K562 (cell line): ENCODE measurements at regions of chr17 and their contacts with region 1.

Region 1: GRCh38 chr17:80426681-80427326 is 11.8 kb downstream of the ENDOV start:
- DNase-seq: peak; percentile 84 to 90 (median 90)
- ATAC-seq: peak; percentile 98
- H3K4me3 ChIP-seq: no peak overlapping the region
- H3K27ac ChIP-seq: no peak overlapping the region
- H3K4me1 ChIP-seq: peaks cover 0 to 57% of the 10 kb centered on the region in 2 experiments; a peak in 2 of 5 replicates
- H3K27me3 ChIP-seq: peaks cover 23 to 93% of the 10 kb centered on the region in 2 experiments; a peak in 4 of 5 replicates
- CTCF ChIP-seq: peak; percentile 94 to 98 (median 96)
- EP300 ChIP-seq: no peak
- POLR2A ChIP-seq: no peak
- RAD21 ChIP-seq: peak; percentile 95 to 99

Region 2: DNA sequence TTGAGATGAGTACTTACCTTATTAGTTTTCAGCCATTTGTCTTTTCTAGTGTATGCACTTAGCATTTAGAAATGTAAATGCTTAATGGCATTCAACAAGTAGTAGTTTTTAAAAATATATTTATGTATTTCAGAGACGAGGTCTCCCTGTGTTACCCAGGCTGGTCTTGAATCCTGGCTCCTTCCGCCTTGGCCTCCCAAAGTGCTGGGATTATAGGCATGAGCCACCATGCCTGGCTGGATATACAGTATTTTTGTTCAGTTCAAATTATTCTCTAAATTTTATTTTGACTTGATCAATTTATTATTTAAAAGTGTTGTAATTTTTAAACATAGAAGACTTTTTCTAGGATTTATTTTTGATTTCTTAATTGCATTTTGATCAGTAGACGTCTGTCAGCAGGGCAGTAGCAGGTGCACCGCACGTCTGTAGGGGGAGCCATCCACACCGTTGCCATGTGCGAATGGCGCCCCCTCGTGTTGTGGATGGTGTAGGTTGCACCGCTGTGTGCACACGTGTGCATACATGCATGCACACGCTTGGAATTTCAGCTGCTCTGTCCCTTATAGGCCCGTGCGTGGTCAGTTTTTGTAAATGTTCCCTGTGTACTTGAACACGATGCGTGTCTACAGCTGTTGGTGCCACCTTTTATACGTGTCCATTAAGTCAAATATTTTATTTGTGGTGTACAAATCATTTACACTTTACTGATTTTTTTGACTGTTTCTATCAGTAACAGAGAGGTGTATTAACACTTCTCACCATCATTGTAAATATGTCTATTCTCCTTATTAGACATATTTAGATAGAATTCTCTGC is 148.5 kb after region 1 on chr17:
- CTCF ChIA-PET with region 1: interaction called, 38 read pairs
- POLR2A ChIA-PET with region 1: no interaction called
- in situ Hi-C with region 1: loop called (anchors 5 kb)
- intact Hi-C with region 1: loop called (anchors 1 kb)
- DNase-seq: peak; percentile 88 to 94 (median 92)
- ATAC-seq: peak; percentile 100
- H3K4me3 ChIP-seq: no peak overlapping the region
- H3K27ac ChIP-seq: no peak overlapping the region
- H3K4me1 ChIP-seq: peaks cover 4 to 20% of the 10 kb centered on the region in 2 experiments; a peak in 4 of 5 replicates
- H3K27me3 ChIP-seq: no peaks in the 10 kb centered on the region
- CTCF ChIP-seq: peak; percentile 100
- EP300 ChIP-seq: peak; percentile 41; the same call in 1 of the 2 replicates
- POLR2A ChIP-seq: no peak
- RAD21 ChIP-seq: peak; percentile 81 to 97

Region 3: GRCh38 chr17:80649678-80650672 is 223.2 kb after region 1 on chr17:
- CTCF ChIA-PET with region 1: interaction called, 8 read pairs
- POLR2A ChIA-PET with region 1: no interaction called
- in situ Hi-C with region 1: no loop called
- intact Hi-C with region 1: loop called (anchors 5 kb)
- DNase-seq: peak; percentile 54 to 78 (median 68)
- ATAC-seq: peak; percentile 100
- H3K4me3 ChIP-seq: no peak overlapping the region
- H3K27ac ChIP-seq: no peak overlapping the region; the same call in 2 of the 3 replicates
- H3K4me1 ChIP-seq: peaks cover 17 to 18% of the 10 kb centered on the region in 2 experiments
- H3K27me3 ChIP-seq: no peaks in the 10 kb centered on the region
- CTCF ChIP-seq: peak; percentile 98 to 100 (median 100)
- EP300 ChIP-seq: no peak
- POLR2A ChIP-seq: no peak
- RAD21 ChIP-seq: peak; percentile 50 to 74

Region 4: GRCh38 chr17:80899402-80900268 is 472.8 kb after region 1 on chr17:
- CTCF ChIA-PET with region 1: interaction called, 17 read pairs
- POLR2A ChIA-PET with region 1: interaction called, 3 read pairs
- in situ Hi-C with region 1: no loop called
- intact Hi-C with region 1: loop called (anchors 1 kb)
- DNase-seq: peak; percentile 74 to 86 (median 81)
- ATAC-seq: peak; percentile 96
- H3K4me3 ChIP-seq: no peak overlapping the region
- H3K27ac ChIP-seq: no peak overlapping the region
- H3K4me1 ChIP-seq: peaks cover 0 to 10% of the 10 kb centered on the region in 2 experiments; a peak in 1 of 5 replicates
- H3K27me3 ChIP-seq: no peaks in the 10 kb centered on the region
- CTCF ChIP-seq: peak; percentile 81 to 93 (median 92)
- EP300 ChIP-seq: no peak
- POLR2A ChIP-seq: no peak
- RAD21 ChIP-seq: peak; percentile 69 to 86

Region 5: GRCh38 chr17:80970044-80970761 is 543.4 kb after region 1 on chr17:
- CTCF ChIA-PET with region 1: interaction called, 20 read pairs
- POLR2A ChIA-PET with region 1: interaction called, 6 read pairs
- in situ Hi-C with region 1: no loop called
- intact Hi-C with region 1: no loop called
- DNase-seq: peak in 3 of 4 experiments; percentile 34 to 52 (median 40)
- ATAC-seq: peak; percentile 77
- H3K4me3 ChIP-seq: no peak overlapping the region
- H3K27ac ChIP-seq: no peak overlapping the region
- H3K4me1 ChIP-seq: peaks cover 0 to 49% of the 10 kb centered on the region in 2 experiments; a peak in 4 of 5 replicates
- H3K27me3 ChIP-seq: peaks cover 15 to 20% of the 10 kb centered on the region in 2 experiments
- CTCF ChIP-seq: peak; percentile 48 to 60 (median 48)
- EP300 ChIP-seq: no peak
- POLR2A ChIP-seq: no peak
- RAD21 ChIP-seq: peak in 1 of 2 experiments; percentile 57; a peak in 2 of 4 replicates

Region 6: GRCh38 chr17:80981062-80981902 is 554.5 kb after region 1 on chr17:
- CTCF ChIA-PET with region 1: interaction called, 17 read pairs
- POLR2A ChIA-PET with region 1: interaction called, 3 read pairs
- in situ Hi-C with region 1: loop called (anchors 5 kb)
- intact Hi-C with region 1: loop called (anchors 5 kb)
- DNase-seq: peak in 3 of 4 experiments; percentile 80 to 83 (median 82)
- ATAC-seq: peak; percentile 84
- H3K4me3 ChIP-seq: peak overlapping the region; percentile 22; the same call in 1 of the 2 replicates
- H3K27ac ChIP-seq: no peak overlapping the region
- H3K4me1 ChIP-seq: peaks cover 0 to 38% of the 10 kb centered on the region in 2 experiments; a peak in 3 of 5 replicates
- H3K27me3 ChIP-seq: peaks cover 12 to 31% of the 10 kb centered on the region in 2 experiments; a peak in 4 of 5 replicates
- CTCF ChIP-seq: peak; percentile 59 to 77 (median 61)
- EP300 ChIP-seq: no peak
- POLR2A ChIP-seq: no peak
- RAD21 ChIP-seq: peak; percentile 75 to 88